Endothelial cell of umbilical vein (primary cell): ENCODE measurements at regions of chr12 and their contacts with region 1.

Region 1: DNA sequence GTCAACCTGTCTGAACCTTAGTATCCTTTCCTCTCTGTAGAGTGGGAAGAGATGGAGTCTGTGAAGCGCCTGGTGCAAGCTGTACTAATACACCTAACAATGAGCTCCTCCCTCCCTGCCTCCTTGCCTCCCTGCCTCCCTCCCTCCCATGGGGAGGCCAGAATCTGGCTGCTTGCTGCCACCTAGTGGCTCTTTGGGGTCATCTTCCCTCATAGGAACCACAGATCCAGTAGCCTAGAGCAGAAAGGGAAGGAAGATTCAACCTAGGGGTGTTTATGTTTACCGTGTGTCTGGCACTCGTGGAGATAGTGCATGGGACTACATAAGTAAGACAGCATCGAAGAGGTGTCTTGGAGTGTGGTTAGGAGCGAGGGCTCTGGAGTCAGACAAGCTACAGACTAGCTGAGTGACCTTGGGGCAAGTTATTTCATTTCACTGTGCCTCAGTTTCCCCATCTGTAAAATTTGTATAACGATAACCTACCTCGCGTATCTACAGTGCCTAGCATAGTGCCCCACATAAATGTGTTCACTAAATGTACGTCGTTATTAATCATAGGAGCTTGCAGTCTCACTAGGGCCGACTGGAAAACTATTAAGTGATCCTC is 35.5 kb upstream of the TSPAN9 start:
- DNase-seq: peak; percentile 68
- H3K4me3 ChIP-seq: no peak overlapping the region
- H3K27ac ChIP-seq: no peak overlapping the region
- H3K4me1 ChIP-seq: no peaks in the 10 kb centered on the region
- H3K27me3 ChIP-seq: no peaks in the 10 kb centered on the region
- CTCF ChIP-seq: peak; percentile 50 to 70
- POLR2A ChIP-seq: no peak

Region 2: DNA sequence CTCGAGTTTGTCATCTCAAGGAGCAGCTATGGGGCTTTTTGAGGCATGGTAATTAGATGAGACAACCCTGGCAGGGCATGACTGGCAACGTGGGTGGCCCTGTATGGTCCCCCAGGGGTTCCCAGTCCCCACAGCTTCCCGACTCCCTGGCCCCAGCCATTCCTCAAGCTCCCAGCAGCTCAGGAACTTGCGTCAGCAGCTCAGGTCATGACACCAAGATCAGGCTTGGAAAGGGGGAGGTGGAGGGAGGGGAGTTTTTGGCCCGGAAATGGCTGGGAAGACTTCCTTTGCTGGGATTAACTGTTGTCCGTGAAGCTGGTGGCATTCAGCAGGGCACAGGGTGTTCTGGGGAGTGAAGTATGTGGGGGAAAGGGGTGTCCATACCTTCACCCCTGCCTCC is 196.4 kb before region 1 on chr12:
- CTCF ChIA-PET with region 1: interaction called, 22 read pairs
- POLR2A ChIA-PET with region 1: no interaction called
- dilution Hi-C with region 1: no loop called
- intact Hi-C with region 1: no loop called
- DNase-seq: peak; percentile 74
- H3K4me3 ChIP-seq: no peak overlapping the region
- H3K27ac ChIP-seq: peak overlapping the region; percentile 75
- H3K4me1 ChIP-seq: peaks cover 23% of the 10 kb centered on the region
- H3K27me3 ChIP-seq: no peaks in the 10 kb centered on the region
- CTCF ChIP-seq: no peak
- POLR2A ChIP-seq: peak; percentile 65

Region 3: DNA sequence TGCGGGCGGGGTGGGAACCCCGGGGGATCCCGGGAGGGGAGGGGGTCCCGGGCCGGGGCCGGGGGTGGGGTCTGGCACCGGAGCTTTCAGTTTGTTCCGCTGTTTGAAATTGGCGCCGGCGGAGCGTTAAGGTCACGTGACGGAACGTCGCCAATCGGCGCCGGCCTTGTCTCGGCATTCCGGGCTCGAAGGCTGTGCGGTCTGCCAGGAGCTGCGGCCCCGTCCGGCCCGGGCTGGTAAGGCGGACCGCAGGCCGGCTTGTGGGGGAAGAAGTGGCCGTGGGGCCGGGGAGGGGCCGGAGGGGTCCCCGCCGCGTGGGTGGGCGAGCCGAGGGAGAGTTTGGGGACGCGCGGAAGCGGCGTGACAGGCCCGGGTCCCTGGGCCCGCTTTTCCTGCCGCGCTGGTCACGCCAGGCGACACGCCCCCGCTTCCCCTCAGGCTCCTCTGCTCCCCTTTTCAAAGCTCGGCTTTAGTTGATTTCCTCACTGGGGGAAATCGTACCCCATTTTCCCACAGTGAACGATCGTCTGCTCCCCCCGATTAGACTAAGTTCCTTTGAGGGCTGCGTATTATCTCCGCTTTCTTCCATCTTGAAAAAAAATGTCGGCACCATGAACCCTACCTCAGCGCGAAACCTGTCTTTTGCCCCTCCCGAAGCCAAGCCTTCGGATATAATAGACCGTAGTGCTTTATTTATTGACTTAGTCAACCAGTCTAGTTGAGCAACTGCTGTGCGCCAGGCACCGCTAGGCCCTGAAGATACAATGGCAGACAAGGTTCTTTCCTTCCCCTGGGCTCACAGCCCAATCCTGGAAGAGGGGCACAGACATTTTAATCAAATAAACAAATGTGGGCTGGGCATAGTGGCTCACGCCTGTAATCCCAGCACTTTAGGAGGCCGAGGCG is 164.4 kb before region 1 on chr12 and contains the starts of genes FOXM1 and RHNO1:
- CTCF ChIA-PET with region 1: interaction called, 17 read pairs
- POLR2A ChIA-PET with region 1: interaction called, 4 read pairs
- dilution Hi-C with region 1: no loop called
- intact Hi-C with region 1: no loop called
- DNase-seq: peak; percentile 90
- H3K4me3 ChIP-seq: peak within 1 kb of the TSS; percentile 56 to 99 (median 99)
- H3K27ac ChIP-seq: peak within 1 kb of the TSS; percentile 88
- H3K4me1 ChIP-seq: peaks cover 17% of the 10 kb centered on the region
- H3K27me3 ChIP-seq: no peaks in the 10 kb centered on the region
- CTCF ChIP-seq: peak in 1 of 2 donors; percentile 24
- POLR2A ChIP-seq: peak; percentile 81
- total RNA-seq, gene FOXM1: 110 and 136 TPM in 2 replicates
- total RNA-seq, gene RHNO1: 33.8 and 39.9 TPM in 2 replicates

Region 4: DNA sequence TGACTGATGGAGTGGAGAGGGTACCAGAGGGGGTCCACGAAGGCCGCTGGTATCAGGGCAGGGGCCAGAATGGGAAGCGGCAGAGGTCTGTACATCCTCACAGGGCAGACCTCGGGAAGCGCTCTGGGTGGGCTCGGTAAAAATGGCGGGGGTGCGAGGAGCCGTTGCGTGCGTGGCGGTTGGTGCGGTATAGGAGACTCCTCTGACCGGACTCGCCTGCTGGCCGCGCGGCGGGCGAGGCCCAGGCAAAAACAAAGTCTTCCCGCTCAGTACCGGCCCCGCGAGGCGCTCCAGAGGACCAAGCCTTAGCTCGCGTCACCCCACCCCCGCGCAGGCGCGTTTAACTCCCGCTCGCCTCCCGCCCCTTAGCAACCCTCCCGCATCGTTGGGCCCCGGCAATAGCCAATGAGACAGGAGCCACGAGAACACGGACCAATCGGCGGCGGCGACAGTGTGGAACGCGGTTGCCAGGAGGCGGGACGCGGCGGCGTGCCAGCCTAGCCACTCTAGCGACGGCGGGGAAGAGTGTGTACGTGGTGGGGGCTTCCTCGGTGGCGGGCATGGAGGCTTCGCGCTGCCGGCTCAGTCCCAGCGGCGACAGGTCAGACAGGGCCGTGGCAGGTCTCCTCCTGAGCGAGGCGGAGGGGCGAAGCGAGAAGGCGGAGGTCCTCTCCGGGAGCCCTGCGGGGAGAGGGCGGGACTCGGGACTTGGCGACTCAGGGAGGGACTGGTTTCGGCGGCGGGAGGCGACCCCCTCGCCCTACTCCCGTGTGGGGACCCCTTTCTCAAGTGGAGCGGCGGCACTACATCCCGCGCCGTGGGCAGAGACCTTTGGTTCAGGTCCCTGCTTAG is 151.0 kb before region 1 on chr12 and contains the start of gene TULP3:
- CTCF ChIA-PET with region 1: interaction called, 78 read pairs
- POLR2A ChIA-PET with region 1: no interaction called
- dilution Hi-C with region 1: no loop called
- intact Hi-C with region 1: loop called (anchors 1 kb)
- DNase-seq: peak; percentile 99
- H3K4me3 ChIP-seq: peak within 1 kb of the TSS; percentile 32 to 76 (median 75)
- H3K27ac ChIP-seq: peak within 1 kb of the TSS; percentile 59
- H3K4me1 ChIP-seq: peaks cover 11% of the 10 kb centered on the region
- H3K27me3 ChIP-seq: no peaks in the 10 kb centered on the region
- CTCF ChIP-seq: peak in 1 of 2 donors; percentile 18
- POLR2A ChIP-seq: peak; percentile 86
- total RNA-seq, gene TULP3: 30.8 and 32.9 TPM in 2 replicates

Region 5: DNA sequence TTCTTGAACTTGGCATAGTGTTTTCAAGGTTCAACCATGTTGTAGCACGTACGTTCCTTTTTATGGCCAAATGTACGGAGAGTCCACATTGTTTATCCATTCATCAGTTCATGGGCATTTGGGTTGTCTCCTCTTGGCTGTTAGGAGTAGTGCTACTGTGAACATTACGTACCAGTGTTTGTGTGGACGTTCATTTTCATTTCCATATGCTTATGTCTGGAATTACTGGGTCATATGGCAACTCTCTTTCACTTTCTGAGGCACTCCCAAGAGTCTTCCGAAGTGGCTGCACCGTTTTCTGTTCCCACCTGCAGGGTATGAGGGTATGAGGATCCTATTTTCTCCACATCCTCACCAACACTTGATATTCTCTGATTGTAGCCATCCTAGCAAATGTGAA is 13.6 kb before region 1 on chr12:
- CTCF ChIA-PET with region 1: interaction called, 15 read pairs
- POLR2A ChIA-PET with region 1: interaction called, 3 read pairs
- dilution Hi-C with region 1: no loop called
- intact Hi-C with region 1: no loop called
- DNase-seq: no peak
- H3K4me3 ChIP-seq: no peak overlapping the region
- H3K27ac ChIP-seq: no peak overlapping the region
- H3K4me1 ChIP-seq: peaks cover 11% of the 10 kb centered on the region
- H3K27me3 ChIP-seq: no peaks in the 10 kb centered on the region
- CTCF ChIP-seq: no peak
- POLR2A ChIP-seq: no peak

Region 6: GRCh38 chr12:3122835-3123678 is 81.4 kb after region 1 on chr12:
- CTCF ChIA-PET with region 1: interaction called, 12 read pairs
- POLR2A ChIA-PET with region 1: no interaction called
- dilution Hi-C with region 1: no loop called
- intact Hi-C with region 1: no loop called
- DNase-seq: peak; percentile 98
- H3K4me3 ChIP-seq: no peak overlapping the region
- H3K27ac ChIP-seq: peak overlapping the region; percentile 65
- H3K4me1 ChIP-seq: peaks cover 18% of the 10 kb centered on the region
- H3K27me3 ChIP-seq: no peaks in the 10 kb centered on the region
- CTCF ChIP-seq: peak; percentile 15 to 41
- POLR2A ChIP-seq: peak; percentile 72

Region 7: GRCh38 chr12:3511760-3512159 is 470.1 kb after region 1 on chr12:
- CTCF ChIA-PET with region 1: no interaction called
- POLR2A ChIA-PET with region 1: no interaction called
- dilution Hi-C with region 1: no loop called
- intact Hi-C with region 1: no loop called
- DNase-seq: no peak
- H3K4me3 ChIP-seq: no peak overlapping the region
- H3K27ac ChIP-seq: no peak overlapping the region
- H3K4me1 ChIP-seq: no peaks in the 10 kb centered on the region
- H3K27me3 ChIP-seq: no peaks in the 10 kb centered on the region
- CTCF ChIP-seq: no peak
- POLR2A ChIP-seq: no peak

Region 8: GRCh38 chr12:3803865-3804472 is 762.3 kb after region 1 on chr12:
- CTCF ChIA-PET with region 1: no interaction called
- POLR2A ChIA-PET with region 1: no interaction called
- dilution Hi-C with region 1: no loop called
- intact Hi-C with region 1: no loop called
- DNase-seq: peak; percentile 59
- H3K4me3 ChIP-seq: no peak overlapping the region
- H3K27ac ChIP-seq: no peak overlapping the region
- H3K4me1 ChIP-seq: no peaks in the 10 kb centered on the region
- H3K27me3 ChIP-seq: no peaks in the 10 kb centered on the region
- CTCF ChIP-seq: peak; percentile 88 to 90
- POLR2A ChIP-seq: no peak